Endothelial cell of umbilical vein (primary cell): ENCODE measurements at regions of chr22 and their contacts with region 1.

Region 1: DNA sequence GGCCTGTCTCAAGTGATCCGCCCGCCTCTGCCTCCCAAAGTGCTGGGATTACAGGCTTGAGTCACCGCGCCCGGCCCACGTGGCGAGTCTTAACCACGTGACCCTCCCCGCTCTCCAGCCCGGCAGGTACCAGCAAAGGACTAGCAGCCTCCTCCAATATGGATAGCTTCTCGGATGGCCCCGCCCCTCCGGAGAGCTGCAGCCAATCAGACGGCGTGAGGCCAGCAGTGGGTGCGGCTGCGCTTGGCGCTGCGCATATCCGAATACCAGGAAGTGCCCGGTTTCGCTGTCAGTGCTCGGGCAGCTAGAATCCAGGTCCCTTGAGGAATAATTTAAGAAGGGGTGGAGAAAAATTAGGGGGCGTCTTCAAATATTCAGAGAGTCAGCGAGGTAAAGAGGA is 14.7 kb upstream of the PISD start:
- DNase-seq: peak; percentile 93
- H3K4me3 ChIP-seq: peak overlapping the region; percentile 31 to 53 (median 34)
- H3K27ac ChIP-seq: peak overlapping the region; percentile 63
- H3K4me1 ChIP-seq: peaks cover 4% of the 10 kb centered on the region
- H3K27me3 ChIP-seq: no peaks in the 10 kb centered on the region
- CTCF ChIP-seq: no peak
- POLR2A ChIP-seq: peak; percentile 44

Region 2: GRCh38 chr22:31489604-31490495 is 186.8 kb before region 1 on chr22 and contains the start of gene EIF4ENIF1:
- CTCF ChIA-PET with region 1: no interaction called
- POLR2A ChIA-PET with region 1: no interaction called
- dilution Hi-C with region 1: no loop called
- intact Hi-C with region 1: no loop called
- DNase-seq: peak; percentile 86
- H3K4me3 ChIP-seq: peak within 1 kb of the TSS; percentile 85 to 96 (median 87)
- H3K27ac ChIP-seq: peak within 1 kb of the TSS; percentile 84
- H3K4me1 ChIP-seq: peaks cover 24% of the 10 kb centered on the region
- H3K27me3 ChIP-seq: no peaks in the 10 kb centered on the region
- CTCF ChIP-seq: no peak
- POLR2A ChIP-seq: peak; percentile 6
- total RNA-seq, gene EIF4ENIF1: 36.6 and 38.7 TPM in 2 replicates

Region 3: GRCh38 chr22:31776231-31776630 is 99.5 kb after region 1 on chr22:
- CTCF ChIA-PET with region 1: no interaction called
- POLR2A ChIA-PET with region 1: no interaction called
- dilution Hi-C with region 1: no loop called
- intact Hi-C with region 1: loop called (anchors 1 kb)
- DNase-seq: peak; percentile 16
- H3K4me3 ChIP-seq: no peak overlapping the region
- H3K27ac ChIP-seq: peak overlapping the region; percentile 6
- H3K4me1 ChIP-seq: peaks cover 16% of the 10 kb centered on the region
- H3K27me3 ChIP-seq: no peaks in the 10 kb centered on the region
- CTCF ChIP-seq: no peak
- POLR2A ChIP-seq: no peak